BJ (cell line): ENCODE measurements at regions of chr1 and their contacts with region 1.

Region 1: DNA sequence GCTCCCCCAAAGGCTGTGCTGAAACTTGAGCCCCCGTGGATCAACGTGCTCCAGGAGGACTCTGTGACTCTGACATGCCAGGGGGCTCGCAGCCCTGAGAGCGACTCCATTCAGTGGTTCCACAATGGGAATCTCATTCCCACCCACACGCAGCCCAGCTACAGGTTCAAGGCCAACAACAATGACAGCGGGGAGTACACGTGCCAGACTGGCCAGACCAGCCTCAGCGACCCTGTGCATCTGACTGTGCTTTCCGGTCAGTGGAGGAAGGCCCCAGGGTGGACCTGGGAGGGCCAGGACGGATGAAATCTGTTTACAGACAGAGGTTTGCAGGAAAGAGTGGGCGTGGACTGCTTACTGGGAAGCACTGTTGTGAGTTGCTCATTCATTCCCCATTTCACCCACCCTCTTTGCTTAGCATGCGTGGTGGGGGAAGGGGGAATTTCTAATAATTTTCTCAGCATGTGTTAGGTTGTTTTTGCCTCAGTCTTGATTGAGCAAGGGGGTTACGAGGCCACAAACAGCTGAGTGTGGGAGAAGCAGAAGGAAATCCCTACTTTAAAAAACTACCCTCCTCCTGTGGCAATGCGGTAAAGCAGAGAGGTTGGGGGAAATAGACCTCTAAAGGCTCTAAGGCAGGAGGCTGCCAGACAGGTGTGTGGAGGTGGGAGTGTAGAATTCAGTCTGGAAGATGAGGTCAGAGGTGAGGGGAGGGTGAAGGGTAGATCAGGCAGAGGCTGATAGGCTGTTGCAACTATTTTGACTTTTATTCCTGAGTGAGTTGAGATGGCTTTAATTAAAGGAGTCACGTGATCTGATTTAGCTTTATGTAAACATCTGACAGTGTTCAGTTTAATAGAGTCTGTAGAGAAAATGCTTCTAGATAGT is 1.3 kb downstream of the FCGR2A start:
- DNase-seq: no peak
- H3K4me3 ChIP-seq: no peak overlapping the region
- H3K27me3 ChIP-seq: no peaks in the 10 kb centered on the region
- CTCF ChIP-seq: no peak

Region 2: GRCh38 chr1:161843156-161843555 is 336.6 kb after region 1 on chr1:
- CTCF ChIA-PET with region 1: no interaction called
- POLR2A ChIA-PET with region 1: interaction called, 16 read pairs
- DNase-seq: no peak
- H3K4me3 ChIP-seq: no peak overlapping the region
- H3K27me3 ChIP-seq: no peaks in the 10 kb centered on the region
- CTCF ChIP-seq: no peak